ENCODE measurements at regions of chr7 and their contacts with region 1.

Region 1: GRCh38 chr7:55179931-55180661 is 161.3 kb downstream of the EGFR start:
- DNase-seq: no peak
- H3K4me3 ChIP-seq: no peak overlapping the region
- H3K27ac ChIP-seq: no peak overlapping the region
- H3K4me1 ChIP-seq: peaks cover 6 to 21% of the 10 kb centered on the region in 2 donors
- H3K27me3 ChIP-seq: no peaks in the 10 kb centered on the region
- CTCF ChIP-seq: no peak
- POLR2A ChIP-seq: no peak

Region 2: GRCh38 chr7:55122267-55122666 is 57.8 kb before region 1 on chr7:
- intact Hi-C with region 1: loop called (anchors 2 kb)
- DNase-seq: no peak
- H3K4me3 ChIP-seq: no peak overlapping the region
- H3K27ac ChIP-seq: peak overlapping the region; percentile 81 to 94
- H3K4me1 ChIP-seq: peaks cover 16 to 23% of the 10 kb centered on the region in 2 donors
- H3K27me3 ChIP-seq: no peaks in the 10 kb centered on the region
- CTCF ChIP-seq: no peak
- POLR2A ChIP-seq: no peak